Calu3 (cell line): ENCODE measurements at regions of chr6 and their contacts with region 1.

Region 1: DNA sequence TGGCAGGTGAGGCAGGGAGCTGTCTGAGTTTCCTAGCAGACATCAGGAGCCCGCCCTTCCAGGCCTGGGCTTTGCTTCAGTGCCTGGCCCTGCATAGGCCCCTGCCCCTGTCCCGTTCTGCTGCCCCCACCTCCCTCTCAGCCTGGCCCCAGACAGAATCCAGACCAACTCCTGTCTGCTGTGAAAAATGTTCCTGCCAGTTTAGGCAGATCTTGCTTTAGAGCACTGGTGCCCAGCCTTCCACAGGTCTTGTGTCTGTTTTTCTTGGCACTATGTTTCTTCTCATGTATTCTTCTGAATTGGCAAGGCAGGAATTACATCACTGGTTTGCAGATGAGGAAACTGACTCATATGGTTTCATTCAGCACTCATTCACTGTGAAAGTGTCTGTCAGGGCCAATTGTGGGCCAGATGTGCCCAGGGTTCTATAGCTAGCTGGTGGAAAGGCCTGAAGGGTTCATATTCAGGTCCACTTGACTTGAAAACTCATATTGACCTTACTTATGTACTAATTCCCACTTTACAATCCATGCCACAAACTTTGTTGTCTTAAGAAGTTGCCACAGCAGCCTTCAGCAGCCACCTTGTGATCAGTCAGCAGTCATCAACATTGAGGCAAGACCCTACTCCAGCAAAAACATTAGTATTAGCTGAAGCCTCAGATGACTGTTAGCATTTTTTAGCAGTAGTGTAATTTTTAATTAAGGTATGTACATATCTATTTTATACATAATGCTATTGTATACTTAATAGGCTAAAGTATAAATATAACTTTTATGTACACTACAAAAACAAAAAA is 40.5 kb downstream of the HLA-F start:
- DNase-seq: no peak
- H3K4me3 Mint-ChIP-seq: no peak overlapping the region
- H3K27ac Mint-ChIP-seq: no peak overlapping the region
- H3K4me1 Mint-ChIP-seq: peaks cover 28% of the 10 kb centered on the region
- H3K27me3 Mint-ChIP-seq: peaks cover 36% of the 10 kb centered on the region
- CTCF ChIP-seq: no peak

Region 2: DNA sequence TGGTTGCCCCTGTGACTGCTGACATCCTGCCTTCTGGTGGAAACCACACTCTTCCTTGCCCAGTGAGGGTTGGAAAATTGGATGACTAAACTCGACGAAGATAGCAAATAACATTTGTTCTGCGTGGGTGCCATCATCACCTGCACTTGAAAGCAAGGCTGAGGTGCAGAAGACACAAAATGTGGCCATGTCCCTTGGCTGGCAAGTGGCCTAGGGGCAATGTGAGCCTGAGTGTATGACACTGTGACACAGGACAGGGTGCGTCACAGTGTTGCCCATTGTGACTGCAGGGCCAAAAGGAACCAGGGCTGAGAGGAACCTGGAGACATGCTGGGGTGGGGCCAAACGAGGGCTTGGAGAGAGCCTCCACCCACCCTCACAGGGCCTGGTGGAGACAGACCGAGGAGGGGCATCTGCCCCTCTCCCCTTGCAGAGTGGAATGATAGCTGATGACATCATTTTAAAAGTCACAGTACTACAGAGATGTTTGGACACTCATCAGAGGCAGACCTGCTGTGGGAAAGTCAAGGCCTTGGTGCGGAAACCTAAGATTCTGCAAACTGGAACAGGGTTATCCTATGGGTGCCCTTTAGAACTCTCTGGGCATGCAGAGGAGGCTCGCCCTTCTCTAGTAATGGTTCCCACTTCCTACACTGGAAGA is 53.3 kb before region 1 on chr6:
- CTCF ChIA-PET with region 1: no interaction called
- intact Hi-C with region 1: no loop called
- DNase-seq: no peak
- H3K4me3 Mint-ChIP-seq: no peak overlapping the region
- H3K27ac Mint-ChIP-seq: no peak overlapping the region
- H3K4me1 Mint-ChIP-seq: peaks cover 8% of the 10 kb centered on the region
- H3K27me3 Mint-ChIP-seq: peaks cover 61% of the 10 kb centered on the region
- CTCF ChIP-seq: no peak

Region 3: GRCh38 chr6:29792123-29793035 is 28.7 kb after region 1 on chr6:
- CTCF ChIA-PET with region 1: no interaction called
- intact Hi-C with region 1: loop called (anchors 2 kb)
- DNase-seq: peak; percentile 50
- H3K4me3 Mint-ChIP-seq: peak overlapping the region; percentile 80
- H3K27ac Mint-ChIP-seq: peak overlapping the region; percentile 62
- H3K4me1 Mint-ChIP-seq: peaks cover 17% of the 10 kb centered on the region
- H3K27me3 Mint-ChIP-seq: peaks cover 14% of the 10 kb centered on the region
- CTCF ChIP-seq: peak; percentile 33

Region 4: DNA sequence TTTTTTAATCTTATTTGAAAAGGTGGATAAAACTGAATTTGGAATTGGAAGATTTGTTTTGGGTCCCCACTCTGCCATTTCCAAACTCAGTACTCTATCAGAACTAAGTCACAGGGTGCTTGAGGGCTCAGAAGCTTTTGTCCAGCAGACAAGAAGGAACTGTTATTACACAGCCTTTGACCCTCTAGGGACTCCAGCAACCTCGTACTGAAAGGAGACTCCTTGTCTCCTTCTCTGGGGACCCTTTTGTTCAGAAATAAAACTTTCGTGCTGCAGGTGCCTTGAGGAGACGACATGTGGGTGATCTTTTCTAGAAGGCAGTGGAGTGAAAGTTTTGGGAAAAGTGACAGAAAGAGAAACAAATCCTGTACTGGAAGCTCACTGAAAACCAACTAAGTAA is 290.0 kb after region 1 on chr6:
- CTCF ChIA-PET with region 1: no interaction called
- intact Hi-C with region 1: no loop called
- DNase-seq: no peak
- H3K4me3 Mint-ChIP-seq: no peak overlapping the region
- H3K27ac Mint-ChIP-seq: no peak overlapping the region
- H3K4me1 Mint-ChIP-seq: no peaks in the 10 kb centered on the region
- H3K27me3 Mint-ChIP-seq: no peaks in the 10 kb centered on the region
- CTCF ChIP-seq: no peak